Activated B cell treated with CpG ODN at 0.5 μM for 24 hours (primary cell): ENCODE measurements at regions of chr22 and their contacts with region 1.

Region 1: DNA sequence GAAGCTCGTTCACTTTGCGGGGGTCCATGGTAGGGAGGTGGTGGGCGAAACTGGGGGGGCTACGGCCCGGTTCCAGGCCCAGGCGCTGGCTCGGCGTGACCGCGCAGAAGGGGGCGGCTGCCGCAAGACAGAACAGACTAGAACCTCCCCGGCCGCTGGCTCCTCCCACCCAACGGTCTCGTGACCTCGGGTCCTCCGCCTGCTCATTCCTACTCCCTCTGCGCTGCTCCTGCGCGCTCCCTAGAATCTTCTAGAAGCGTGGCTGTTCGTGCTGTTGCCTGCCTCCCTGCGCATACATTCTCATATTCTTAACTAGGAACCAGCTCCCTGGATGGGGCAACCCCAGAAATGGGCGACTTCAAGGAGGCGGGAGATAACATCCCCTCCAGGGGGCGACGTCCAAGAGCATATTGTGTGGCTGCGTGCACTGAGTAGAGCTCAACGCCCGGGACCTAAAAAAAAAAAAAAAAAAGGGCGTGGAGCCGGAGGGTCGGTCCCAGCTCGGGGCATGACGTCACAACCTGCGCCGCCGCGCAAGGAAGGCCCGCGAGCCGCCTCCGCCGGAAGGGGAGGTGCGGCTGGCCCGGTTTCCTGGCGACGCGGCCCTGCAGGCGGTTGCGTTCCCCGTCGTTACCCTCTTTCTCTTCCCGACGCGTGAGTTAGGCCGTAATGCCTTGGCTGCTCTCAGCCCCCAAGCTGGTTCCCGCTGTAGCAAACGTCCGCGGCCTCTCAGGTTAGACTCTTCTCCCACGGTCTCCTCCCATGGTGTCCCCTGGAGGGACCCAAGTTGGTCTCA is at the starts of genes ST13 and XPNPEP3:
- DNase-seq: peak; percentile 96
- ATAC-seq: peak; percentile 90
- H3K4me3 Mint-ChIP-seq: peak within 1 kb of the TSS; percentile 98
- H3K27ac Mint-ChIP-seq: peak within 1 kb of the TSS; percentile 100
- H3K4me1 Mint-ChIP-seq: peaks cover 47% of the 10 kb centered on the region
- H3K27me3 Mint-ChIP-seq: no peaks in the 10 kb centered on the region
- CTCF ChIP-seq: no peak
- total RNA-seq, gene ST13: 183 and 221 TPM in 2 replicates
- total RNA-seq, gene XPNPEP3: 20.3 and 20.8 TPM in 2 replicates

Region 2: DNA sequence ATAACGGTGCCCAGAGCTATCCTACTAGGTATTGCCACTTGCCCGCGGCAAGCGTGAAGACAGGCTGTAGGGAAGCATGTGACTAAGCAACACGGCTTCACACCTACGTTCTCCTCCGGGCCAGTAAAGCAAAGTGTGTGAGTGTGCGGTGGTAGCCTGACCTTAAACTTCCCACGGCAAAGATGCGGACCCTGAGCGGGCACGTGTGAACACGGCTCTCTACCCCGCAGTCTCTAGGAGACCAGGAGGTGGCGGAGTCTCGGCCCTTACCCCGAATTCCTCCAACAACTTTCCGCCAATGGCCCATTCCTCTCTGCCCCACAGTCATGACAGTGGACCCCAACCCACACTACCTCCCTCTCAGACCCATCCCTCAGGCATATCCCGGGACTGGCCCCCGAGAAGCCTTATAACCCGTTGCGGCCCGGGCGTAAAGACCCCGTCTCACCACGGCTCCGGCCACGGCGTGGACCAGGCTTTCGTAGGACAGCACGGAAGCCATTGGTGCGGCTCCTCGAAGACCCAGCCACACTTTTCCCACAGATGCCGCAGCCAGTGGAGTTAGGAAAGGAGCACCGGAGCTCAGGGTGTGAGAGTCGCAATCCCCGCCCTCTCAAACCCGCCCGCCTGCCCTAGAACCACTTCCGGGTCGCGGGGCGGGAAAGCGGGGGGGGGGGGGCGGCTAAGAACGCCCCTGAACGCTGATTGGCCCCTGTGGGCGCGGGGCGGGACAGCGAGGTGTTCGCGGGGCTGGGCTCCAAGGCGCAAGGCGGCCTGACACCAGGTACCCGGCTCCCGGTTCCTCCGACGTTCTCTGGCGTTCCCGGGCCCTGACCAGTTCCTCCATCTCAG is 37.7 kb before region 1 on chr22 and contains the start of gene SLC25A17:
- CTCF ChIA-PET with region 1: interaction called, 4 read pairs
- POLR2A ChIA-PET with region 1: interaction called, 18 read pairs
- intact Hi-C with region 1: loop called (anchors 1 kb)
- DNase-seq: peak; percentile 78
- ATAC-seq: peak; percentile 93
- H3K4me3 Mint-ChIP-seq: peak within 1 kb of the TSS; percentile 98
- H3K27ac Mint-ChIP-seq: peak within 1 kb of the TSS; percentile 92
- H3K4me1 Mint-ChIP-seq: peaks cover 36% of the 10 kb centered on the region
- H3K27me3 Mint-ChIP-seq: no peaks in the 10 kb centered on the region
- CTCF ChIP-seq: no peak
- total RNA-seq, gene SLC25A17: 14.8 and 19.3 TPM in 2 replicates

Region 3: DNA sequence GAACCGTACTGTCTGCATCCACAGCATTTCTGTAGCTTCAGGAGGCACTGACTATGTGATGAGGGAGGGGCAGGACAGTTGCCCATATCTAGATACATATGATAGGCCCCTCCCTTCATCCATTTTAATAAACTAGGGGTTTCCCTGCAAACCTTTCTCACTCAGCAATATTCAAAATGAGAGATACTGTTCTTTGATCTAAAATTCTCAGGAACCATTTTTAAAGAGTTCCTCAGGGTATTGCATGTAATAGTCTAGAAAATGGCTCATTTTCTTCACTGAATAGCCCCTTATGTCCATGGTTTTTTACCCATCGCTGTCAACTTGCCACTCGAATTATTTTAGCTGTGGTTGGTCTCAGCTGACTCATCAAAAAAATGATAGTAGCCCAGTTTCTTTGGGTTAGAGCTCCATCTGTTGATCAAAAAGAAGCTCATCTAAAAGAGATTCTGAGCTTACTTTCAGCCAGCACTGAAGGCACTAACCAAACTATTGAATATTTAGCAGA is 42.2 kb after region 1 on chr22:
- CTCF ChIA-PET with region 1: interaction called, 6 read pairs
- POLR2A ChIA-PET with region 1: no interaction called
- intact Hi-C with region 1: loop called (anchors 2 kb)
- DNase-seq: no peak
- ATAC-seq: peak; percentile 71
- H3K4me3 Mint-ChIP-seq: no peak overlapping the region
- H3K27ac Mint-ChIP-seq: peak overlapping the region; percentile 21
- H3K4me1 Mint-ChIP-seq: peaks cover 3% of the 10 kb centered on the region
- H3K27me3 Mint-ChIP-seq: no peaks in the 10 kb centered on the region
- CTCF ChIP-seq: no peak

Region 4: GRCh38 chr22:40990430-40990829 is 133.7 kb after region 1 on chr22:
- CTCF ChIA-PET with region 1: no interaction called
- POLR2A ChIA-PET with region 1: no interaction called
- intact Hi-C with region 1: no loop called
- DNase-seq: no peak
- ATAC-seq: no peak
- H3K4me3 Mint-ChIP-seq: no peak overlapping the region
- H3K27ac Mint-ChIP-seq: no peak overlapping the region
- H3K4me1 Mint-ChIP-seq: no peaks in the 10 kb centered on the region
- H3K27me3 Mint-ChIP-seq: peaks cover 22% of the 10 kb centered on the region
- CTCF ChIP-seq: no peak